Natural killer cell (primary cell): ENCODE measurements at regions of chr7 and their contacts with region 1.

Region 1: GRCh38 chr7:39948956-39949928 is 814 bp upstream of the CDK13 start:
- DNase-seq: peak; percentile 97 to 100
- ATAC-seq: peak; percentile 67 to 84 (median 70)
- H3K4me3 ChIP-seq: peak overlapping the region; percentile 98
- H3K4me3 Mint-ChIP-seq: peak overlapping the region; percentile 98
- H3K27ac ChIP-seq: peak overlapping the region; percentile 99
- H3K27ac Mint-ChIP-seq: peak overlapping the region; percentile 98 to 100
- H3K4me1 ChIP-seq: peaks cover 9% of the 10 kb centered on the region
- H3K4me1 Mint-ChIP-seq: peaks cover 40 to 46% of the 10 kb centered on the region in 2 donors
- H3K27me3 ChIP-seq: no peaks in the 10 kb centered on the region
- H3K27me3 Mint-ChIP-seq: no peaks in the 10 kb centered on the region
- CTCF ChIP-seq: no peak

Region 2: GRCh38 chr7:39937366-39938153 is 11.7 kb before region 1 on chr7:
- intact Hi-C with region 1: no loop called
- DNase-seq: no peak
- ATAC-seq: no peak
- H3K4me3 ChIP-seq: no peak overlapping the region
- H3K4me3 Mint-ChIP-seq: no peak overlapping the region
- H3K27ac ChIP-seq: no peak overlapping the region
- H3K27ac Mint-ChIP-seq: no peak overlapping the region
- H3K4me1 ChIP-seq: no peaks in the 10 kb centered on the region
- H3K4me1 Mint-ChIP-seq: no peaks in the 10 kb centered on the region
- H3K27me3 ChIP-seq: no peaks in the 10 kb centered on the region
- H3K27me3 Mint-ChIP-seq: no peaks in the 10 kb centered on the region
- CTCF ChIP-seq: no peak

Region 3: DNA sequence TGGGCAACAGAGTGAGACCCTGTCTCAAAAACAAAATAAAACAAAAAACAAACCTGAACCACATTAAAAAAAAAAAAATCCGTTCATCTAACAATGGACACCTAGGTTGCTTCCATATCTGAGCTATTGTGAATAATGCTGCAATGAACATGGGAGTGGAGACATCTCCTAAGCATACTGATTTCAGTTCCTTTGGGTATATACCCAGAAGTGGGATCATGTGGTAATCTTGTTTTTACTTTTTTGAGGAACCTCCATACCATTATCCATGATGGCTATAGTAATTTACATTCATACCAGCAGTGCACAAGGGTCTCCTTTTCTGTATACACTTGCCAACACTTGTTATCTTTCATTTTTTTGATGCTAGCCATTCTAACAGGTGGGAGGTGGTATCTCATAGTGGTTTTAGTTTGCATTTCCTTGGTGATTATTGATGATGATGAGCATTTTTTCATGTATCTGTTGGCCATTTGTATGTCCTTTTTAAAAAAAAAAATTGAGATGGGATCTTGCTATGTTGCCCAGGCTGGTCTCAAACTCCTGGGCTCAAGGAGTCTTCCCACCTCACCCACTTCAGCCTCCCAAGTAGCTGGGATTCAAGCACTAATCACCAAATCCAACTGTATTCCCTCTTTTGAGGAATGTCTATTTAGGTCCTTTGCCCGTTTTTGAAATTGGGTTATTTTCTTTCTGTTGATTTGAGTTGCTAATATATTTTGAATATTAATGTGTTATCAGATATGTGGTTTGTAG is 18.3 kb after region 1 on chr7:
- intact Hi-C with region 1: loop called (anchors 2 kb)
- DNase-seq: no peak
- ATAC-seq: peak in 1 of 3 donors; percentile 10
- H3K4me3 ChIP-seq: no peak overlapping the region
- H3K4me3 Mint-ChIP-seq: peak overlapping the region; percentile 13
- H3K27ac ChIP-seq: no peak overlapping the region
- H3K27ac Mint-ChIP-seq: peak overlapping the region in 1 of 2 donors; percentile 67
- H3K4me1 ChIP-seq: peaks cover 26% of the 10 kb centered on the region
- H3K4me1 Mint-ChIP-seq: peaks cover 93 to 98% of the 10 kb centered on the region in 2 donors
- H3K27me3 ChIP-seq: no peaks in the 10 kb centered on the region
- H3K27me3 Mint-ChIP-seq: no peaks in the 10 kb centered on the region
- CTCF ChIP-seq: no peak

Region 4: GRCh38 chr7:39987476-39988347 is 38.5 kb after region 1 on chr7:
- intact Hi-C with region 1: loop called (anchors 5 kb)
- DNase-seq: peak in 1 of 2 donors; percentile 68
- ATAC-seq: peak in 2 of 3 donors; percentile 21 to 36
- H3K4me3 ChIP-seq: no peak overlapping the region
- H3K4me3 Mint-ChIP-seq: no peak overlapping the region
- H3K27ac ChIP-seq: no peak overlapping the region
- H3K27ac Mint-ChIP-seq: peak overlapping the region; percentile 81 to 82
- H3K4me1 ChIP-seq: peaks cover 12% of the 10 kb centered on the region
- H3K4me1 Mint-ChIP-seq: peaks cover 50 to 51% of the 10 kb centered on the region in 2 donors
- H3K27me3 ChIP-seq: no peaks in the 10 kb centered on the region
- H3K27me3 Mint-ChIP-seq: no peaks in the 10 kb centered on the region
- CTCF ChIP-seq: no peak

Region 5: DNA sequence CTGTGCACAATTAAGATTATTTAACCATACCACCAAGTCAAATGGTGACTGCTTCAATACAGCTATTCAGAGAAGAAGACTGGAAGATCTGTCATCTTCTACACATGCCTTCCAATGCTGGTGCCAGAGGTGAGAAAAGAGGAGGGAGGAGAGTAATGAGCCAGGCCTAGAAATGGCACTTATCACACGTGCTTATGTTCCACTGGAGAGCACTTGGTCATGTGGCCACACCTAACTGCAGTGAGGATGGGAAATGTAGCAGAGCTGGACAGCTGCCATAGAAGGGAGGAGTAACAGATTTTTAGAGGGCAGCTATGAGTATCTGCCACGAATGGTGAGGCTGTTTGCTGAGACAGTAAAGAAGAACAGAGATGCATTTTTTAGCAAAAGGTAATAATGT is 108.0 kb after region 1 on chr7:
- intact Hi-C with region 1: loop called (anchors 1 kb)
- DNase-seq: no peak
- ATAC-seq: no peak
- H3K4me3 ChIP-seq: no peak overlapping the region
- H3K4me3 Mint-ChIP-seq: no peak overlapping the region
- H3K27ac ChIP-seq: no peak overlapping the region
- H3K27ac Mint-ChIP-seq: peak overlapping the region; percentile 37 to 69
- H3K4me1 ChIP-seq: no peaks in the 10 kb centered on the region
- H3K4me1 Mint-ChIP-seq: peaks cover 17 to 21% of the 10 kb centered on the region in 2 donors
- H3K27me3 ChIP-seq: no peaks in the 10 kb centered on the region
- H3K27me3 Mint-ChIP-seq: no peaks in the 10 kb centered on the region
- CTCF ChIP-seq: no peak

Region 6: GRCh38 chr7:40134428-40135316 is 185.4 kb after region 1 on chr7 and contains the starts of genes MPLKIP and SUGCT:
- intact Hi-C with region 1: loop called (anchors 1 kb)
- DNase-seq: peak; percentile 87 to 94
- ATAC-seq: peak; percentile 90 to 96 (median 90)
- H3K4me3 ChIP-seq: peak within 1 kb of the TSS; percentile 96
- H3K4me3 Mint-ChIP-seq: peak within 1 kb of the TSS; percentile 93
- H3K27ac ChIP-seq: peak within 1 kb of the TSS; percentile 86
- H3K27ac Mint-ChIP-seq: peak within 1 kb of the TSS; percentile 90
- H3K4me1 ChIP-seq: peaks cover 6% of the 10 kb centered on the region
- H3K4me1 Mint-ChIP-seq: peaks cover 22 to 24% of the 10 kb centered on the region in 2 donors
- H3K27me3 ChIP-seq: peaks cover 5% of the 10 kb centered on the region
- H3K27me3 Mint-ChIP-seq: peaks cover 13 to 15% of the 10 kb centered on the region in 2 donors
- CTCF ChIP-seq: peak; percentile 94
- total RNA-seq, gene MPLKIP: 16.0 to 26.9 (median 17.1) TPM
- total RNA-seq, gene SUGCT: 0.40 to 0.59 TPM in 2 of 3 donors, not detected in the other